MCF 10A (cell line): ENCODE measurements at regions of chr18 and their contacts with region 1.

Region 1: DNA sequence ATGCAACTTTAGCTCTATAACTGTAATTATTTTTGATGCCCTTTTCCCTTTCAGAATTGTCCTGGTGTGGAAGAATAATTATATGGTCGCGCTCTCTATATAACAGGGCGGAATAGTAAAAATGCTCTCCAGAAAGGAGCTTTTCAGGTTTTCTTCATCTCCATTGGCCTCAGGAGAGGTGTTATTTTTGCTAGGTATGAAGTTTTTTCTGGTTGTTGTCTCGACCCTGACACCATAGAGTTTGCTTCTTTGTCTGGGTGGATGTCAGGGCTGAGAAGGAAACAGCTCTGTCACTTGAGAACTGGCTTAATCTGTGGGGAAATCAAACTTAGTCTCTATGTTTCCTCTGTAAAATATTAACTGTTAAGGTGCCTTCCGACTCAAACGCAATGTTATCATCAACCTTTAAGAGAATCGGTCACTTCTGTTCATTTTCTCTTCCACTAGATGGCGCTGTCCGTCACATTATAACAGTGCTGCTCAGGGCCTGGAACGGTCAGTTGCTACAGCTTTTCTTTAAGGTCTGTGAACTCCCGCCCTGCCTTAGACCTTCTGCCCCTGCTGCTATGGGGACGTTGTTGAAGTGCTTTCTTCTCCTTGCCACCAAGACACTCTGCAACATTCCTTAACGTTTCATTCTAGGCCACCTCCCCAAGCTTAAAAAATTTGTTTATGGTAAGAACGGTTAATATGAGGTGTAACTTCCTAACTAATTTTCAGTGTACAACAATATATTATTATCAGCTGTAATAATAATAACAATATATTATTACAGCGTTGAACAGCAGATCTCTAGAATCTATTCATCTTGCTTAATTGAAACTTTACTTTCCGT is 23.8 kb upstream of the SERPINB12 start:
- DNase-seq: peak; percentile 89
- H3K4me3 Mint-ChIP-seq: no peak overlapping the region
- H3K27ac Mint-ChIP-seq: no peak overlapping the region
- H3K4me1 Mint-ChIP-seq: peaks cover 12% of the 10 kb centered on the region
- H3K27me3 Mint-ChIP-seq: no peaks in the 10 kb centered on the region
- CTCF ChIP-seq: peak; percentile 55

Region 2: GRCh38 chr18:63553117-63553516 is 34.7 kb after region 1 on chr18:
- CTCF ChIA-PET with region 1: interaction called, 21 read pairs
- POLR2A ChIA-PET with region 1: interaction called, 3 read pairs
- intact Hi-C with region 1: no loop called
- DNase-seq: peak; percentile 47
- H3K4me3 Mint-ChIP-seq: no peak overlapping the region
- H3K27ac Mint-ChIP-seq: peak overlapping the region; percentile 80
- H3K4me1 Mint-ChIP-seq: peaks cover 18% of the 10 kb centered on the region
- H3K27me3 Mint-ChIP-seq: no peaks in the 10 kb centered on the region
- CTCF ChIP-seq: no peak

Region 3: DNA sequence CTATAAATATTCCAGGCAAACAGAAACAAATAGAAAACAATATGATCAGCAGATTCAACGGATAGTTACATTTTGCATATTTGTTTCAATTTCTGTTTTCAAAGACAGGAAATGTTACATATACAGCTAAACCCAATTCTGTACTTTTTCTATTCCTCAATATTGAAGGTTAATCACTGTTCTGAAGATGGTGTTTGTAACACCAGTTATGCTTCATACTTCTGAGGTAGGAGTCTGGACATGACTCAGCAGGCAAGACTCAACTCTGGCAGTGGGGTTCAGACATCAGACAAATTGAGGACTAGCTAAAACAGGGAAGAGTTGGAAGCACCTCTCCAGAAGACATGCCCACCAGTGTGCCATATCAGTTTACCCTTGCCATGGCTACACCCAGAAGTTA is 85.4 kb after region 1 on chr18:
- CTCF ChIA-PET with region 1: interaction called, 11 read pairs
- POLR2A ChIA-PET with region 1: no interaction called
- intact Hi-C with region 1: no loop called
- DNase-seq: peak; percentile 55
- H3K4me3 Mint-ChIP-seq: no peak overlapping the region
- H3K27ac Mint-ChIP-seq: peak overlapping the region; percentile 6
- H3K4me1 Mint-ChIP-seq: peaks cover 18% of the 10 kb centered on the region
- H3K27me3 Mint-ChIP-seq: no peaks in the 10 kb centered on the region
- CTCF ChIP-seq: no peak

Region 4: DNA sequence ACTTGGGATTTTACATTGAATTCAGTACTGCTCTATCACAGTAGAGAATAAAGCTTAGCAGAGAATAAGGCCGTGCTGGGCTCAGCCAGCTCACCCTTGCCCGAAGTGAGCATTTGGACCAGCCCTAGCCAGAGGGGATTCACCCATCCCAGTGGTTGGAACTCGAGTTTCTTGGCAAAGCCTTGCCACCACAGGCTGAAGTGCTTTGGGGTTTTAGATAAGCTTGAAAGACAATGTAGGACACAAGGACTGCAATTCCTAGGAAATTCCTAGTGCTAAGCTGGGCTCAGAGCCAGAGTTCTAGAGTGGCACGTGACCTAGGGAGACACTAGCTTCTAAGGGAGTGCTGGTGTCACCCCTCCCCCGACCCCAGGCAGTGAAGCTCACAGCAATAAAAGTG is 212.4 kb after region 1 on chr18:
- CTCF ChIA-PET with region 1: interaction called, 11 read pairs
- POLR2A ChIA-PET with region 1: no interaction called
- intact Hi-C with region 1: no loop called
- DNase-seq: peak; percentile 76
- H3K4me3 Mint-ChIP-seq: peak overlapping the region; percentile 12
- H3K27ac Mint-ChIP-seq: peak overlapping the region; percentile 44
- H3K4me1 Mint-ChIP-seq: peaks cover 11% of the 10 kb centered on the region
- H3K27me3 Mint-ChIP-seq: no peaks in the 10 kb centered on the region
- CTCF ChIP-seq: no peak

Region 5: GRCh38 chr18:63808125-63808524 is 289.7 kb after region 1 on chr18:
- CTCF ChIA-PET with region 1: no interaction called
- POLR2A ChIA-PET with region 1: no interaction called
- intact Hi-C with region 1: no loop called
- DNase-seq: no peak
- H3K4me3 Mint-ChIP-seq: no peak overlapping the region
- H3K27ac Mint-ChIP-seq: no peak overlapping the region
- H3K4me1 Mint-ChIP-seq: no peaks in the 10 kb centered on the region
- H3K27me3 Mint-ChIP-seq: no peaks in the 10 kb centered on the region
- CTCF ChIP-seq: no peak

Region 6: GRCh38 chr18:63819786-63820185 is 301.4 kb after region 1 on chr18:
- CTCF ChIA-PET with region 1: interaction called, 11 read pairs
- POLR2A ChIA-PET with region 1: no interaction called
- intact Hi-C with region 1: no loop called
- DNase-seq: no peak
- H3K4me3 Mint-ChIP-seq: no peak overlapping the region
- H3K27ac Mint-ChIP-seq: no peak overlapping the region
- H3K4me1 Mint-ChIP-seq: peaks cover 19% of the 10 kb centered on the region
- H3K27me3 Mint-ChIP-seq: no peaks in the 10 kb centered on the region
- CTCF ChIP-seq: no peak

Region 7: GRCh38 chr18:63936156-63936931 is 417.9 kb after region 1 on chr18:
- CTCF ChIA-PET with region 1: interaction called, 31 read pairs
- POLR2A ChIA-PET with region 1: interaction called, 4 read pairs
- intact Hi-C with region 1: loop called (anchors 1 kb)
- DNase-seq: peak; percentile 90
- H3K4me3 Mint-ChIP-seq: no peak overlapping the region
- H3K27ac Mint-ChIP-seq: peak overlapping the region; percentile 40
- H3K4me1 Mint-ChIP-seq: no peaks in the 10 kb centered on the region
- H3K27me3 Mint-ChIP-seq: no peaks in the 10 kb centered on the region
- CTCF ChIP-seq: peak; percentile 75

Region 8: DNA sequence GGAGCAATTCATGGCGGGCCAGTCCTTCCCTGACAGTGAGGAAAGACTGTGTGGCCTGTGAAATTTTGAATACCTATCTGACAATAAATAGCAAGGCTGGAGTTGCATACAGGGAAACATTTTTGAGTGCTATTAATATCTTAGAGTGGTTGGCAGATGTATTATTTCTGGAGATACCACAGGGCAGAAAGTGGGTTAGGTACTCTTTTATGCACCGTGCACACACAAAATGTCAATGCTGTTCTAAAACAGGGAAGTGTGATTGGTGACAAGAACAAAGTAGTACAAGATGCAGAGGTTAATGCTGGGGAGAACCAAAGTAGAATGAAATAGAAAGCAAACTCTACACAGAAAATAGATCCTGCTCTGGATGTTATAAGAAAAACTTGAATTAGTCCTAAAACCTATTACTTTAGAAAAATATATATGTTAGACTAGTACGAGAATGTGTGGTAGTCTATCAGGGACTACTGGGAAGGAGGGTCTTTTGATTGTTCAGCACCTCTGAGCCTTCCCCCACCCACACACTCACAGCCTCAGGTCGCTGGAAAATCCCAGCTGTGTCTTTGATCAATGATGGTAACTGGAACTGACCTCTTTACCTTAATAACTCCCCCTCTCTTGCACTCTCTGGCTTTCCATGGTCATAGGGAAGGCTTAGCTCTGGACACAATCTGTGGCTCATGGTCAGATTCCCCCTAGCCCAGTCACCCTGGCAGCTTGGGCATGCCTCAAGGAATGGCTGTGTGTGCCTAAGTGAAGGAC is 509.7 kb after region 1 on chr18:
- CTCF ChIA-PET with region 1: no interaction called
- POLR2A ChIA-PET with region 1: no interaction called
- intact Hi-C with region 1: no loop called
- DNase-seq: no peak
- H3K4me3 Mint-ChIP-seq: no peak overlapping the region
- H3K27ac Mint-ChIP-seq: no peak overlapping the region
- H3K4me1 Mint-ChIP-seq: no peaks in the 10 kb centered on the region
- H3K27me3 Mint-ChIP-seq: peaks cover 86% of the 10 kb centered on the region
- CTCF ChIP-seq: no peak